Activated CD4-positive, alpha-beta memory T cell treated with anti-CD3 and anti-CD28 coated beads for 36 hours (primary cell): ENCODE measurements at regions of chr22 and their contacts with region 1.

Region 1: DNA sequence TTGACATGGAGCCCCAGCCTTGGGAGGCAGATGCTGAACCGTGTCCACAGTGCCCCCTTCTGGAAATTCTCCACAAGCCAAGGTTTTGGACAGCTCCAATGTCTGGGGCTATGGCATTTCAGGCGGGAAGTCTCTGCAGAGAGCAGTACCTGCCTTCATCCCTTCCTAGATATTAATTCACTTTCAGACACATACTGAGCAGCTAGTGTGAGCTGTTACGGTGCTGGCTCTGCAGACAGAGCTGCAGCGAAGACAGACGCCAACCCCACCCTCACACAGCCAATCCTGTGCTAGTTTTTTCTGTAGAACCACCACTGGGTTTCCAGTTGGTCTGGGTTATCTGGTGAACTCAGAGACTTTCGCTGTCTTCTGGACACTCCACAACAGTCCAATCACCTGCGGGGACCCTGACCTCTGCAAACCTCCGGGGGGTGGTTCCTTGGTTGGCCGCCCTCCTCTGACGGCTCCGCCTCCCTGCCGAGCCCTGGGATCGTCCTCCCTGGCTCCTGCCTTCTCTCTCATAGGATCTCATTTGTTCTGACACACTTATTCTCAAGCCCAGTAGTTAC is 9.1 kb downstream of the LMF2 start:
- DNase-seq: peak; percentile 82
- H3K4me3 Mint-ChIP-seq: no peak overlapping the region
- H3K27ac Mint-ChIP-seq: no peak overlapping the region
- H3K4me1 Mint-ChIP-seq: no peaks in the 10 kb centered on the region
- H3K27me3 Mint-ChIP-seq: no peaks in the 10 kb centered on the region

Region 2: DNA sequence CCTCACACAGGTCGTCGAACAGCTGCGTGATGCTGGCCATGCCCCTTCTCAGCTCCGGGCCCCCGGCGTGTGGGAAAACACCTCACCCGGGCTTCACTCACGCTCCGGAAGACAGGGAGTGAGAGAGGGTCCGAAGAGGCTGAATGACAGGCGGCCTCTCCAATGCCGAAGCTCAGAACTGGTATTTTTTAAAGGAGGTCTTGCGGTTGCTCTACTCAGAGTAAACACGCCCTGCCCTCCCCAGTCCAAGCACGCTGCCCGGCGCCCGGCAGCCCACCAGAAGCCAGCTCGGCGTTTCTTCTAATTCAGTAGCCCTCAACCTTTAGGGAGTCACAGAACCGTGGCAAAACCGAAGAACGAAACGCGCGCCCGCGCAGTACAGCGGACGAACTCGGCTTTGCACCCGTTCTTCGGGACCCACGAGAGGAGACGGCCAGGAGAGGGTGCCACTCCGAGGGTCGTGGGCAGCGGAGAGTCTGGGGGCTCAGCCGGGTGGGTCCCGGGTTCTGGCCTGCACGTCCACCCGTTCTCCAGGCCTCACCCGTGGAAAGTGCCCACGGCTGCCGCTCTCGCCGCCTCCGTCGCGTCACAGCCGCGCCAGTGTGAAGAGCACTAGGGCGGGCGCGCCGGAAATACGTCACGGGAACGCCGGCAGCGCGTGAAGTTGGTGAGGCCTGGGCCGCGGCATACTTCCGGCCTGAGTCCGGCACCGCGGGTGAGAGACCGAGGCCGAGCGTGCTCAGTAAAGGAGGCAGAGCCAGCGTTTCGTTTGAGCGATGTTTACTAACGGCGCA is 253.8 kb before region 1 on chr22 and contains the start of gene TUBGCP6:
- CTCF ChIA-PET with region 1: interaction called, 12 read pairs
- POLR2A ChIA-PET with region 1: no interaction called
- intact Hi-C with region 1: no loop called
- DNase-seq: peak; percentile 95
- H3K4me3 Mint-ChIP-seq: peak within 1 kb of the TSS; percentile 91
- H3K27ac Mint-ChIP-seq: peak within 1 kb of the TSS; percentile 90
- H3K4me1 Mint-ChIP-seq: peaks cover 41% of the 10 kb centered on the region
- H3K27me3 Mint-ChIP-seq: no peaks in the 10 kb centered on the region
- total RNA-seq, gene TUBGCP6: 41.4 to 43.8 TPM

Region 3: DNA sequence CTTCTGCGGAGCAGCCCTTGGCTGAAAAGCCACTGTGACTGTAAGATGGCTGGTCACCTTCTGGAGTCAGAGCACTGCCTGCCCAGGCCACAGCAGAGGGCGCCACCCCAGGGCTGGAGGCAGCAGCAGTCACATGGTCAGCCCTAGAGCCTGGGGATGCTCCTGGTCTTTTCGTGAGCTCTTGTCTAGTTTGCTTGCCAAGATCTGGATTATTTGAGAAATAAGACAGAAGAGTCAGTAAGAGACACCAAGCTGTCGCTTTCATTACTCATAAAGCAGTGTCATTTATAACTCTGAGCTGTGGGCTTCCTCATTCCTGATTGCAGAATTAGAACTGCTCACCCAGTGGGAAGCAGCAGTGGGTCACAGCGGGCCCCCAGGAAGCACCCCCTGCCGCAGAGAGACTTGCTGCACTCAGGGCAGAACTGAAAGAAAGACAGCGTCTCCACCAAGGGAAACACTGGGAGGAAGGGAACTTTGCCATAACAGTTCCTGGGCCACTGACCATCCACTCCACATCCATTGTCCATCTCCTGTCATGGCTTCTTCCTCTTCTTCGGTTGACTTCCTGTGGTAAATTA is 98.6 kb before region 1 on chr22:
- CTCF ChIA-PET with region 1: interaction called, 13 read pairs
- POLR2A ChIA-PET with region 1: no interaction called
- intact Hi-C with region 1: loop called (anchors 1 kb)
- DNase-seq: peak; percentile 52
- H3K4me3 Mint-ChIP-seq: no peak overlapping the region
- H3K27ac Mint-ChIP-seq: peak overlapping the region; percentile 18
- H3K4me1 Mint-ChIP-seq: peaks cover 16% of the 10 kb centered on the region
- H3K27me3 Mint-ChIP-seq: no peaks in the 10 kb centered on the region

Region 4: DNA sequence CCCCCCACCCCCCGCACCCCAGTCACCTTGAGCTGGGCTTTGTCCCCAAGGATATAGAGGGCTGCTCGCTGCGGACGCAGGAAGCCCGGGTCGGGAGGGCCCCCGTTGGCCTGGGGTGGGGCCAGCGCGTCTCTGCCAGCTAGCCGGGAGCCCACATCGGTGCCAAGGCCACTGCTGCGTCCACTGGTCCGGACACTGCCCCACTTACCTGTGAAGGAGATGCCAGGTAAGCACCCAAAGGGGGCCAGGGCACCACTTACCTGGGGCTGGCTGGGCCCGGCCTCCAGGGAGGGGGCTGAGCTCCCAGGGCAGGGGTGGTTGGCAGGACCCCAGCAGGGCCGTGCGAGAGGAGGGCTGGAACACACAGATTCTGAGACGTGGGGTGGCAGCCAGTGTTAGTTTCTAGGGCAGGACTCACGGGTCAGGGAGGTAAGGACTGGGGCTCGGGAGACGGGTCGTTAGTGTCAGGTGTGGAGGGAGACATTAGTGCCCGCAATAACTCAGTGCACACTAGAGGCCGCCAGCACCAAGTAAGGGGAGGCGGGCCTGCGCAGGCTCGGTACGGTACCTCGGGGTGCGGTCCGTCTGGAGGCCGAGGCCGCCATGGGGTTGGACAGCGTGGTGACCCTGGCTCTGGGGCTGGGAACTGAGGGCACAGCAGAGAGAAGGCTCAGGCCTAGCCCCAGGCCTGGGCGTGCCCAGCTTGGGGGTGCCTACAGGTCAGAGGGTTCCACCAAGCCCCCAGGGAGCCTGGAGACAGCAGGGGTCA is 41.8 kb before region 1 on chr22:
- CTCF ChIA-PET with region 1: interaction called, 7 read pairs
- POLR2A ChIA-PET with region 1: no interaction called
- intact Hi-C with region 1: loop called (anchors 5 kb)
- DNase-seq: no peak
- H3K4me3 Mint-ChIP-seq: no peak overlapping the region
- H3K27ac Mint-ChIP-seq: no peak overlapping the region
- H3K4me1 Mint-ChIP-seq: peaks cover 13% of the 10 kb centered on the region
- H3K27me3 Mint-ChIP-seq: no peaks in the 10 kb centered on the region

Region 5: GRCh38 chr22:50481440-50482106 is 16.8 kb before region 1 on chr22 and contains the start of gene ADM2:
- CTCF ChIA-PET with region 1: interaction called, 15 read pairs
- POLR2A ChIA-PET with region 1: interaction called, 4 read pairs
- intact Hi-C with region 1: no loop called
- DNase-seq: peak; percentile 80
- H3K4me3 Mint-ChIP-seq: peak within 1 kb of the TSS; percentile 79
- H3K27ac Mint-ChIP-seq: no peak within 1 kb of the TSS
- H3K4me1 Mint-ChIP-seq: peaks cover 3% of the 10 kb centered on the region
- H3K27me3 Mint-ChIP-seq: peaks cover 3% of the 10 kb centered on the region
- total RNA-seq, gene ADM2: 7.3 to 7.4 TPM